ENCODE measurements at regions of chr12 and their contacts with region 1.

Region 1: GRCh38 chr12:26832822-26833742 is at the start of gene ITPR2:
- DNase-seq: peak; percentile 96 to 97 (median 97)
- ATAC-seq: peak; percentile 96 to 98 (median 97)
- H3K4me3 ChIP-seq: peak within 1 kb of the TSS; percentile 62 to 98 (median 91)
- H3K27ac ChIP-seq: peak within 1 kb of the TSS; percentile 90 to 99 (median 92)
- H3K4me1 ChIP-seq: peaks cover 0 to 53% (median 16%) of the 10 kb centered on the region in 12 donors
- H3K27me3 ChIP-seq: no peaks in the 10 kb centered on the region
- CTCF ChIP-seq: peak in 9 of 12 donors; percentile 19 to 65 (median 45)
- POLR2A ChIP-seq: peak in 1 of 2 donors; percentile 96
- total RNA-seq, gene ITPR2: 6.1 to 45.6 (median 14.1) TPM

Region 2: DNA sequence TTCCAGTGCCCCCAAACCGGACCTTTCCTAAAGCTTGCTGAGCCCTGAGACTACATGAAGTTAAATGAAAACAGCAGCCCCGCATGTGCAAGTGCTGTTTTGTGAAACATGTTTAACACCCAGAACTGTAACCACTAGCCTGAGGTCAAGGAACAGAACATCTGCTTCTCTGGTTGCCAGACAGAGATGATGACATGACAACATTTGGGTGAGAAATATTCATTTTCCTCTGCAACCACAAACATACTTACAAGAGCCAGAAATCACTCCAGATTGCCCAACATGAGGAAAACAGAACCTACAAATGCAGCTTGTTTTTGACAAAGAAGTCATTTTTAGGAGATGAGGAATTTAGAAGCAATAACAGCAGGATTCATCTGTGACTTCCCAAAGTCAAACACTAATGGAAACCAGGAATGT is 1994.5 kb before region 1 on chr12:
- intact Hi-C with region 1: no loop called
- DNase-seq: peak in 2 of 5 donors; percentile 18 to 42
- ATAC-seq: peak; percentile 81 to 92 (median 90)
- H3K4me3 ChIP-seq: no peak overlapping the region
- H3K27ac ChIP-seq: peak overlapping the region in 1 of 12 donors; percentile 15
- H3K4me1 ChIP-seq: peaks cover 0 to 19% (median 0%) of the 10 kb centered on the region in 12 donors
- H3K27me3 ChIP-seq: no peaks in the 10 kb centered on the region
- CTCF ChIP-seq: no peak
- POLR2A ChIP-seq: no peak

Region 3: GRCh38 chr12:26113853-26114719 is 719.0 kb before region 1 on chr12:
- intact Hi-C with region 1: loop called in 1 of 10 experiments (anchors 10 kb)
- DNase-seq: peak; percentile 95 to 96 (median 96)
- ATAC-seq: peak; percentile 83 to 97 (median 92)
- H3K4me3 ChIP-seq: peak overlapping the region; percentile 3 to 65 (median 54)
- H3K27ac ChIP-seq: peak overlapping the region; percentile 88 to 98 (median 93)
- H3K4me1 ChIP-seq: peaks cover 0 to 56% (median 36%) of the 10 kb centered on the region in 12 donors
- H3K27me3 ChIP-seq: no peaks in the 10 kb centered on the region
- CTCF ChIP-seq: peak in 4 of 12 donors; percentile 22 to 43 (median 34)
- POLR2A ChIP-seq: peak in 1 of 2 donors; percentile 89

Region 4: DNA sequence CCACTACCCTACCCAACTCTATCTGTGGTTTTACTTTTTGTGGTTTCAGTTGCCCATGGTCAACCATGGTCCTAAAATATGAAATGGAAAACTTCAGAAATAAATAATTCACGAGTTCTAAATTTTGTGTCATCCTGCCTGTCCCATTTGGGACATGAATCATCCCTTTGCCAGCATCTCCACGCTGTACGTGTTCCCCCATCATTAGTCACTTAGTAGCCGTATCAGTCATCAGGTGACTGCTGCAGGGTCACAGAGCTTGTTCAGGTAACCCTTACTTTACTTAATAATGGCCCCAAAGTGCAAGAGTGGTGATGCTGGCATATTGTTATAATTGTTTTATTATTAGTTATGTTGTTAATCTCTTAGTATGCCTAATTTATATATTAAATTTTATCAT is 209.9 kb before region 1 on chr12:
- intact Hi-C with region 1: no loop called
- DNase-seq: no peak
- ATAC-seq: no peak
- H3K4me3 ChIP-seq: no peak overlapping the region
- H3K27ac ChIP-seq: no peak overlapping the region
- H3K4me1 ChIP-seq: peaks cover 0 to 6% (median 0%) of the 10 kb centered on the region in 12 donors
- H3K27me3 ChIP-seq: no peaks in the 10 kb centered on the region
- CTCF ChIP-seq: no peak
- POLR2A ChIP-seq: no peak

Region 5: GRCh38 chr12:26701604-26702215 is 131.4 kb before region 1 on chr12:
- intact Hi-C with region 1: loop called in 1 of 10 experiments (anchors 5 kb)
- DNase-seq: no peak
- ATAC-seq: no peak
- H3K4me3 ChIP-seq: no peak overlapping the region
- H3K27ac ChIP-seq: no peak overlapping the region
- H3K4me1 ChIP-seq: peaks cover 0 to 31% (median 12%) of the 10 kb centered on the region in 12 donors
- H3K27me3 ChIP-seq: no peaks in the 10 kb centered on the region
- CTCF ChIP-seq: peak; percentile 50 to 74 (median 64)
- POLR2A ChIP-seq: no peak

Region 6: GRCh38 chr12:26723379-26724308 is 109.4 kb before region 1 on chr12:
- intact Hi-C with region 1: loop called in 5 of 10 experiments (anchors 5 to 10 kb)
- DNase-seq: peak in 1 of 5 donors; percentile 33
- ATAC-seq: peak; percentile 86 to 92 (median 90)
- H3K4me3 ChIP-seq: peak overlapping the region in 1 of 12 donors; percentile 1
- H3K27ac ChIP-seq: peak overlapping the region in 9 of 12 donors; percentile 17 to 64 (median 36)
- H3K4me1 ChIP-seq: peaks cover 0 to 43% (median 25%) of the 10 kb centered on the region in 12 donors
- H3K27me3 ChIP-seq: no peaks in the 10 kb centered on the region
- CTCF ChIP-seq: no peak
- POLR2A ChIP-seq: no peak

Region 7: DNA sequence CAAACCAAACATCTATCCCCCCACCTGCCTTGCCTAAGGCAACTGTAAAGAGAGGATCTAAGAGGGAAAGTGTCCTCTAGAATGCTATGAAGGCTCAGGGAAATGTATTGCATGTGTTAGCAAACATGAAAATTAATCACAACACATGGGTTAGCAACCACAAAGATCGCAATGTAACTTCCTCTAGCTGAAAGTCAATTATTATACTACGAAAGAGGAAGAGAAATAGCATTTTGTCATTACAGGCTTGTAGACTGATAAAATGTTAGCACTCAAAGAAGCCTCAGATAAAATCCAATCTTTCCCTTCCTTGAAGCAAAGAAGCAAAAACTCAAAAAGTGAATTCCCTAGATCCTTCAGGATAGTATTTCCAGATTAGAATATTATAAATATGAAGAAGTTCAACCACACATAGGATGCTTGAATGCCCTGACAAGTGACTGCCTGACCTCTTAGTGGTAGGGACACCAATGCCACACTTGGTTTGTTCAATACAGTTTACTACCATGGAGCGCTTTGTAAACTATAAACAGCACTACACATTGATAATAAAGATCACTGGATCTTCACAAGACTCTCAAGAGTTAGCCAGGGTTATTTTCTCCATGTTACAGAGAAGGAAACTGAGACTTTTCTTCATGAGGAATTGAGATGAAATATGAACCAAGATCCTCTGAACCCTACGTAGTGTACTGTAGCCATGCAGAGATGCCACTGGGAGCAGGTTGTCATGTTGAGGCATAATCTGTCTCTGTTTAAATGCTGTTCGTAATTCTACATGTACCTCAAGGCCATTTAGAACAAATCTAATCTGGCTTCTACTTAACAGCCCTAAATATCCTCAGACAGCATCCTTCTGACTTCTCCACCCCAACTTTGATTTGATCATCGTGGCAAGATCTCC is 100.8 kb before region 1 on chr12:
- intact Hi-C with region 1: loop called in 6 of 10 experiments (anchors 5 to 10 kb)
- DNase-seq: no peak
- ATAC-seq: peak in 2 of 4 donors; percentile 22 to 39
- H3K4me3 ChIP-seq: no peak overlapping the region
- H3K27ac ChIP-seq: peak overlapping the region in 1 of 12 donors; percentile 68
- H3K4me1 ChIP-seq: peaks cover 0 to 59% (median 10%) of the 10 kb centered on the region in 12 donors
- H3K27me3 ChIP-seq: no peaks in the 10 kb centered on the region
- CTCF ChIP-seq: no peak
- POLR2A ChIP-seq: no peak

Region 8: DNA sequence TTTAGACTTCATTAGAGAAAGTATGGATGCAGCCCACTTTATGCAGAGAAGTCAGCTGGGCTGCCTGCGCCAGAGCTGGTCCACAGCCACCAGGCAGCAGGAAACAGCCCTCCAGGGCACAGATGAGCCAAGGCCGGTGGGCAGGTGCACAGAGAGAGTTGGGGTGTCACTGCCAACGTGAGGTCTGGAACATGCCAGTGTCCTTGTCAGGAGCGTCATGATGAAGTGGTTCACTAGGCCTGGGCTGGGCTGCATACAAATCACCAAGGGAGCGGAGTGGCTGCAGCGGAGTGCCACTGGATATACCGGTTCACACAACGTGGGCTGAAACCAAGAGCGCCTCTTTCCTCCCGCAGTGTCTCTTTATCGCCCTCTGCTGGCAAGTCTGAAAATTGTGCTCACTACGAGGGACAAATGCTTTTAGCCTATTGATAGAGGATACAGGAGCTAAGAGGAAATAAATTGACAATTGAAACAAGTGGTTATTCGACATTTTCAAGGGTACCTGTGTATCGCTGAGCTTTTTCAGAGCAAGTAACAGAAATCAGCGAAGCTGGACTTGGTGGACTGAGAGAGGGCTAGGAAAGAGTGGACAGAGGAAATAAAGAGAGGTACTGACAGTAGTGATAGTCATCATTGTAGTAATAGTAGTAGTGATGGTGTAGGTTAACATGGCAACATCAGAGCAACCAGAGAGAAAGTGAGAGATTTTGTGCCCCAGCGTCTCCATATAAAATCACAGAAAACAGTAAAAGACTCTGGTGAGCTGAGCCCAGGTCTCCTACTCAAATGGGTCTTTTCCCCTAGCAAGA is 51.9 kb after region 1 on chr12:
- intact Hi-C with region 1: loop called in 1 of 10 experiments (anchors 10 kb)
- DNase-seq: peak; percentile 80 to 82 (median 80)
- ATAC-seq: peak; percentile 80 to 96 (median 94)
- H3K4me3 ChIP-seq: peak overlapping the region in 1 of 12 donors; percentile 18
- H3K27ac ChIP-seq: no peak overlapping the region
- H3K4me1 ChIP-seq: peaks cover 0 to 8% (median 3%) of the 10 kb centered on the region in 12 donors
- H3K27me3 ChIP-seq: no peaks in the 10 kb centered on the region
- CTCF ChIP-seq: peak; percentile 90 to 97 (median 95)
- POLR2A ChIP-seq: no peak

Region 9: GRCh38 chr12:26971963-26972362 is 138.9 kb after region 1 on chr12:
- intact Hi-C with region 1: no loop called
- DNase-seq: no peak
- ATAC-seq: no peak
- H3K4me3 ChIP-seq: no peak overlapping the region
- H3K27ac ChIP-seq: no peak overlapping the region
- H3K4me1 ChIP-seq: peaks cover 0 to 10% (median 0%) of the 10 kb centered on the region in 12 donors
- H3K27me3 ChIP-seq: no peaks in the 10 kb centered on the region
- CTCF ChIP-seq: no peak
- POLR2A ChIP-seq: no peak

Measured in heart left ventricle (tissue), 16 donors.